ENCODE measurements at regions of chr1 and their contacts with region 1.

Region 1: DNA sequence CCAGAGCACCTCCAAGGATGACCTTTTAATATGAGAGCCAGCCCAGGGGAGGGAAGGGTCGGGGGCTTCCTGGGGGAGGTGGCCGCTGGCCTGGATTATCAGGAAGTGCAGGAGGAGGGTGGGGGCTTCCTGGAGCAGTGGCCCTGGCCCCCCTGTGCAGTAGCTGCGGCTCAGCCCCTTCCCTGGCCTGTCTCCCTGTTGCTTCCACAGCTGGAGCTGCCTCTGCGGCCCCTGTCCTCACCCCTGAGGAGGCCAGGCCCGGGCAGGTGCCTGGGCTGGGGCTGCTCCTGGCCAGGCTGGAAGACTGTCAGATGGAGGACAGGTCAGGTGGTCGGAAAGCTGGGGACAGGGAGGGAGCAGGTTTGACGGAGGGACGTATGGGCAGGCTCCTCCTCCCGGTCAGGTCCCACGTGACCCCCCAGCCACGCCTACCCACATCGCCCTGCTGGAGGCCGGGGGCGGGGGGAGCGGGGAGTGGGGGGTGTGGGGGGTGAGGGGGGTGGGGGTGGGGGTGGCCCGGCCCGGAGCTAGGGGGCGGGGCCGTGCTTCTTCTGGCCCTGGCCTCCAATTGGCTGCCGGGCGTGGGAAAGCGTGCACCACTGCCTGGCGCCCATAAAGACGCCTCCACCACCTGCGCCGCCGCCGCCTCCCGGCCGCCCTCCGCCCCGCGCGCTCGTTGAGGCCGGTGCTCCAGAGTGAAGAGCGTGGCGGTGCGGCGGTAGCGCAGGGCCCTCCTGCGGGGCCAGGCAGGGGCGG is 10.2 kb upstream of the TNFRSF14 start:
- DNase-seq: peak; percentile 91 to 94 (median 94)
- ATAC-seq: peak; percentile 60
- H3K4me3 ChIP-seq: peak overlapping the region; percentile 30
- H3K4me1 ChIP-seq: peaks cover 65% of the 10 kb centered on the region
- CTCF ChIP-seq: no peak

Region 2: GRCh38 chr1:2049718-2050427 is 496.1 kb before region 1 on chr1 and contains the start of gene PRKCZ:
- intact Hi-C with region 1: no loop called
- DNase-seq: peak; percentile 94 to 98 (median 97)
- ATAC-seq: peak; percentile 89
- H3K4me3 ChIP-seq: peak within 1 kb of the TSS; percentile 63
- H3K4me1 ChIP-seq: peaks cover 48% of the 10 kb centered on the region
- CTCF ChIP-seq: no peak
- total RNA-seq, gene PRKCZ: 38.9 to 80.2 (median 53.7) TPM

Region 3: GRCh38 chr1:2412519-2413233 is 133.3 kb before region 1 on chr1 and contains the start of gene PEX10:
- intact Hi-C with region 1: loop called (anchors 5 kb)
- DNase-seq: peak; percentile 98 to 100 (median 99)
- ATAC-seq: peak; percentile 87
- H3K4me3 ChIP-seq: peak within 1 kb of the TSS; percentile 44
- H3K4me1 ChIP-seq: peaks cover 44% of the 10 kb centered on the region
- CTCF ChIP-seq: no peak
- total RNA-seq, gene PEX10: 13.4 to 20.4 (median 18.4) TPM